ENCODE measurements at regions of chr7 and their contacts with region 1.

Region 1: GRCh38 chr7:23273141-23273599 is 26.0 kb upstream of the MALSU1 start:
- DNase-seq: peak; percentile 79 to 96 (median 87)
- ATAC-seq: peak; percentile 97
- H3K4me3 ChIP-seq: peak overlapping the region; percentile 15
- H3K4me3 Mint-ChIP-seq: peak overlapping the region; percentile 26
- H3K27ac ChIP-seq: no peak overlapping the region
- H3K27ac Mint-ChIP-seq: no peak overlapping the region
- H3K4me1 ChIP-seq: peaks cover 8% of the 10 kb centered on the region
- H3K4me1 Mint-ChIP-seq: peaks cover 9% of the 10 kb centered on the region
- H3K27me3 ChIP-seq: no peaks in the 10 kb centered on the region
- H3K27me3 Mint-ChIP-seq: peaks cover 4% of the 10 kb centered on the region
- CTCF ChIP-seq: peak; percentile 90

Region 2: GRCh38 chr7:22287412-22287811 is 985.8 kb before region 1 on chr7:
- CTCF ChIA-PET with region 1: no interaction called
- POLR2A ChIA-PET with region 1: no interaction called
- intact Hi-C with region 1: no loop called
- DNase-seq: no peak
- ATAC-seq: no peak
- H3K4me3 ChIP-seq: no peak overlapping the region
- H3K4me3 Mint-ChIP-seq: no peak overlapping the region
- H3K27ac ChIP-seq: no peak overlapping the region
- H3K27ac Mint-ChIP-seq: no peak overlapping the region
- H3K4me1 ChIP-seq: no peaks in the 10 kb centered on the region
- H3K4me1 Mint-ChIP-seq: peaks cover 3% of the 10 kb centered on the region
- H3K27me3 ChIP-seq: peaks cover 0 to 5% of the 10 kb centered on the region in 2 experiments
- H3K27me3 Mint-ChIP-seq: no peaks in the 10 kb centered on the region
- CTCF ChIP-seq: no peak

Region 3: DNA sequence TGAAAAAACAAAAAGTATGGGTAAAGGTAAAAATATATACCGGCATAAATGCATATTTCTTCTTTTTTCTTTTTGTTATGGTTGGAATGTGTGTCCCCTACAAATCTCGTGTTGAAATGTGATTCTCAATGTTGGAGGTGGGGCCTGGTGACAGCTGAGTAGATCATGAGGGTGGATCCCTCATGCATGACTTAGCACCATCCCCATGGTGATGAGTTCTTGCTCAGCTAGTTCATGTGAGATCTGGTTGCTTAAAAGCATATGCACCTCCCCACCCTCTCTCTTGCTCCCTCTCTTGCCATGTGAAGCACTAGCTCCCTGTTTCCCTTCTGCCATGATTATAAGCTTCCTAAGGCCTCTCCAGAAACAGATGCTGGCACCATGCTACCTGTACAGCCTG is 352.5 kb before region 1 on chr7:
- CTCF ChIA-PET with region 1: no interaction called
- POLR2A ChIA-PET with region 1: no interaction called
- intact Hi-C with region 1: no loop called
- DNase-seq: no peak
- ATAC-seq: no peak
- H3K4me3 ChIP-seq: no peak overlapping the region
- H3K4me3 Mint-ChIP-seq: no peak overlapping the region
- H3K27ac ChIP-seq: no peak overlapping the region
- H3K27ac Mint-ChIP-seq: no peak overlapping the region
- H3K4me1 ChIP-seq: no peaks in the 10 kb centered on the region
- H3K4me1 Mint-ChIP-seq: no peaks in the 10 kb centered on the region
- H3K27me3 ChIP-seq: no peaks in the 10 kb centered on the region
- H3K27me3 Mint-ChIP-seq: no peaks in the 10 kb centered on the region
- CTCF ChIP-seq: no peak

Region 4: DNA sequence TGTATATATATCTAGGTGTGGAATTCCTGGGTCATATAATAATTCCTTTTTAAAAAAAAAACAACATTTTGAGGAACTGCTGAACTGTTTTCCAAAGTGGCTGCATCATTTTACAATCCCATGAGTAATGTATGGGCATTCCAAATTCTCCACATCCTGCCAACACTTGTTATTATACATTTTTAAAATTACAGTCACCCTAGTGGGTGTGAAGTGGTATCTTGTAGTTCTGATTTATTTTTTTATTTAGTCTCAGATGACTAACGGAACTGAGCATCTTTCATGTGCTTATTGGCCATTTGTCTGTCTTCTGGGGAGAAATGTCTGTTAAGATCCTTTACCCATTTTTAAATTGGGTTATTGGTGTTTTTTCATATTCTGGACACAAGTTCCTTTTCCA is 179.6 kb before region 1 on chr7:
- CTCF ChIA-PET with region 1: no interaction called
- POLR2A ChIA-PET with region 1: no interaction called
- intact Hi-C with region 1: no loop called
- DNase-seq: no peak
- ATAC-seq: no peak
- H3K4me3 ChIP-seq: no peak overlapping the region
- H3K4me3 Mint-ChIP-seq: no peak overlapping the region
- H3K27ac ChIP-seq: no peak overlapping the region
- H3K27ac Mint-ChIP-seq: no peak overlapping the region
- H3K4me1 ChIP-seq: no peaks in the 10 kb centered on the region
- H3K4me1 Mint-ChIP-seq: no peaks in the 10 kb centered on the region
- H3K27me3 ChIP-seq: peaks cover 3 to 6% of the 10 kb centered on the region in 2 experiments
- H3K27me3 Mint-ChIP-seq: no peaks in the 10 kb centered on the region
- CTCF ChIP-seq: no peak

Region 5: GRCh38 chr7:23234569-23235296 is 38.4 kb before region 1 on chr7:
- CTCF ChIA-PET with region 1: no interaction called
- POLR2A ChIA-PET with region 1: no interaction called
- intact Hi-C with region 1: no loop called
- DNase-seq: peak in 1 of 14 experiments; percentile 9
- ATAC-seq: no peak
- H3K4me3 ChIP-seq: no peak overlapping the region
- H3K4me3 Mint-ChIP-seq: no peak overlapping the region
- H3K27ac ChIP-seq: no peak overlapping the region
- H3K27ac Mint-ChIP-seq: no peak overlapping the region
- H3K4me1 ChIP-seq: peaks cover 3% of the 10 kb centered on the region
- H3K4me1 Mint-ChIP-seq: no peaks in the 10 kb centered on the region
- H3K27me3 ChIP-seq: no peaks in the 10 kb centered on the region
- H3K27me3 Mint-ChIP-seq: no peaks in the 10 kb centered on the region
- CTCF ChIP-seq: no peak

Region 6: DNA sequence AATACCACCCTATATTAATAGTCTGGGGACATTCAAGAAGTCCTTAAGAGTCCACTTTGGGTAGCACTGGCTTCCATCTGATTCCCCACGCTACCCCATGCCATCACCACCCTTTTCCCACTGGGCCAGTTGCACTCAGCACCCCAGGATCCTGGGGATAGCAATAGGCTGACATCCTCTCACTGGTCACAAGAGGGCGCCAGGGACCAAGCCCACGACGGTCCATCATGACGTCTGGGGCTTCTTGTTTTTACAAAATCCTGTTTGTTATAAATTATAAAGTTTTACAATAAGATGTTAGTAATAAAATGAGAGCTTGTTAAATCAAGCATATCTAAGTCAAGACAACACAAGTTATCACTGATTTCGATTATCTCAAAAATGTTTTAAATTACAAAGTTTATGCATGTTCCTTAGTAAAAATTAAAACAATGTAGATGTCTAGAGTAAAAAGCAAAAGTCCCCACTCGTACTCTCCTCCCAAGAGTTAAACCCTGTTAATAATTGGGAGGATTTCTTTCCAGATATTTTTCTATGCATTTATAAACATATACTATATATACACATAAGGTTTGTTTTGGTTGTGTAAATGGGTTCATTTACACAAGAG is 11.2 kb before region 1 on chr7:
- CTCF ChIA-PET with region 1: interaction called, 30 read pairs
- POLR2A ChIA-PET with region 1: interaction called, 3 read pairs
- intact Hi-C with region 1: no loop called
- DNase-seq: peak; percentile 31 to 80 (median 42)
- ATAC-seq: peak; percentile 98
- H3K4me3 ChIP-seq: no peak overlapping the region
- H3K4me3 Mint-ChIP-seq: no peak overlapping the region
- H3K27ac ChIP-seq: no peak overlapping the region
- H3K27ac Mint-ChIP-seq: no peak overlapping the region
- H3K4me1 ChIP-seq: no peaks in the 10 kb centered on the region
- H3K4me1 Mint-ChIP-seq: no peaks in the 10 kb centered on the region
- H3K27me3 ChIP-seq: no peaks in the 10 kb centered on the region
- H3K27me3 Mint-ChIP-seq: peaks cover 19% of the 10 kb centered on the region
- CTCF ChIP-seq: peak; percentile 88

Region 7: DNA sequence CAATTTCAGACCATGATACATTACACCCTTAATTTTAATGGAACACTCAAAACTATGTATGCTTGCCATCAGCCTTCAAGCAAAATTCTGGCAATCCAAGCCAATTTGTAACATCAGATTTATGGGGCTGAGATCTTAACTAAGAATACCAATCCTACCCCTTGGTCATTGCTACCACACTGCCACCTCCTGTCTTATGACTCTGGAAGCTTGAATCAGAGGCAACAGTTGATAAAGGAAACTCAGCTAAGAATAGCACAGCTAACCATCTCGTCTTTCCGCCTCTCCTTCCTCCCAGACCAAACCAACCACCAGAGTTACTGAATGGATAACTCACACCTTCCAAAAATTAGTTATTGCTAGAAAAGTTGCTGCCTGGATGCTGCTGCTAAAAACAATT is 189.7 kb after region 1 on chr7:
- CTCF ChIA-PET with region 1: interaction called, 5 read pairs
- POLR2A ChIA-PET with region 1: no interaction called
- intact Hi-C with region 1: loop called (anchors 2 kb)
- DNase-seq: peak in 3 of 14 experiments; percentile 4 to 35 (median 29)
- ATAC-seq: no peak
- H3K4me3 ChIP-seq: no peak overlapping the region
- H3K4me3 Mint-ChIP-seq: no peak overlapping the region
- H3K27ac ChIP-seq: no peak overlapping the region
- H3K27ac Mint-ChIP-seq: no peak overlapping the region
- H3K4me1 ChIP-seq: peaks cover 7% of the 10 kb centered on the region
- H3K4me1 Mint-ChIP-seq: peaks cover 9% of the 10 kb centered on the region
- H3K27me3 ChIP-seq: peaks cover 39 to 73% of the 10 kb centered on the region in 2 experiments
- H3K27me3 Mint-ChIP-seq: peaks cover 72% of the 10 kb centered on the region
- CTCF ChIP-seq: peak; percentile 10

Region 8: GRCh38 chr7:23712368-23713284 is 439.5 kb after region 1 on chr7:
- CTCF ChIA-PET with region 1: interaction called, 5 read pairs
- POLR2A ChIA-PET with region 1: no interaction called
- intact Hi-C with region 1: loop called (anchors 1 kb)
- DNase-seq: peak in 3 of 14 experiments; percentile 58 to 69 (median 67)
- ATAC-seq: no peak
- H3K4me3 ChIP-seq: no peak overlapping the region
- H3K4me3 Mint-ChIP-seq: no peak overlapping the region
- H3K27ac ChIP-seq: no peak overlapping the region
- H3K27ac Mint-ChIP-seq: no peak overlapping the region
- H3K4me1 ChIP-seq: no peaks in the 10 kb centered on the region
- H3K4me1 Mint-ChIP-seq: no peaks in the 10 kb centered on the region
- H3K27me3 ChIP-seq: no peaks in the 10 kb centered on the region
- H3K27me3 Mint-ChIP-seq: no peaks in the 10 kb centered on the region
- CTCF ChIP-seq: peak; percentile 93